Activated B cell treated with CpG ODN at 0.5 μM for 24 hours (primary cell): ENCODE measurements at regions of chr12 and their contacts with region 1.

Region 1: DNA sequence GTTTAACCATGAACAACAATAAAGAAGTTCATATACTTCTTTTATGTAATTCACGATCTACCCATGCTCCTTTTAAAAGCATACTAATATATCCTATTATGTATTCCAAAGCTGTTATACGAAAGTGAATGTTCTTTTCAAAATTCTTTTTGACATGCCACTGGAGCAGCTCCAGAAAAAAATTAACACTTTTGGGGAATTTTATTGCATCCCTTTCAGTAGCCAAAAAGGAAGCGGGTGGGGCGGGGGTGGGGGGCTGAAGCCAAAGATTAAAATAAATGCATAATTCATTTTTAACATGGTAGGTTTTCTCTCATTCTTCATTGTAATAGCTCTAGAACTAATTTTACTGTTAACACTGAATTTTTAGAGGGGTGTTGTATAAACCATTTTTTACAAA is 123.0 kb downstream of the ANKS1B start:
- DNase-seq: no peak
- ATAC-seq: no peak
- H3K4me3 Mint-ChIP-seq: no peak overlapping the region
- H3K27ac Mint-ChIP-seq: no peak overlapping the region
- H3K4me1 Mint-ChIP-seq: no peaks in the 10 kb centered on the region
- H3K27me3 Mint-ChIP-seq: no peaks in the 10 kb centered on the region
- CTCF ChIP-seq: no peak

Region 2: DNA sequence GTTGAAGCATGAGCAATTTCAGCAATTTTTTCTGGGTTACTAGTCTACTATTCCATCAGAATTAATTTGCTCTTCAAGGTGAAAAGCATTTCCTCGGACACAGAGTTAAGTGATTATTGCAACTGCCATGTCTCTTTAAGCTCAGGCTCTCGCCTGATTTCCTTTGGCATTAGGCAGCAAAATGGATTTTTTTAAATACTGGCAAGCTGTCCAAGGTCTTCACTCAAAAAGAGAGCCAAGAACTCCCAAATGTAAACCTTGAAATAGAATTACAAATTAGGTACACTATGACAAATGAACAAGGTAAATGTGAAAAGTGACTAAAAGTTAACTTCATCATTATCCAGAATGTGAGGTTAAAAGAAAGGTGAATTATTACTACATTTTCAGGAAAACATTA is 102.3 kb before region 1 on chr12:
- CTCF ChIA-PET with region 1: no interaction called
- POLR2A ChIA-PET with region 1: no interaction called
- intact Hi-C with region 1: no loop called
- DNase-seq: no peak
- ATAC-seq: no peak
- H3K4me3 Mint-ChIP-seq: no peak overlapping the region
- H3K27ac Mint-ChIP-seq: no peak overlapping the region
- H3K4me1 Mint-ChIP-seq: no peaks in the 10 kb centered on the region
- H3K27me3 Mint-ChIP-seq: no peaks in the 10 kb centered on the region
- CTCF ChIP-seq: no peak

Region 3: DNA sequence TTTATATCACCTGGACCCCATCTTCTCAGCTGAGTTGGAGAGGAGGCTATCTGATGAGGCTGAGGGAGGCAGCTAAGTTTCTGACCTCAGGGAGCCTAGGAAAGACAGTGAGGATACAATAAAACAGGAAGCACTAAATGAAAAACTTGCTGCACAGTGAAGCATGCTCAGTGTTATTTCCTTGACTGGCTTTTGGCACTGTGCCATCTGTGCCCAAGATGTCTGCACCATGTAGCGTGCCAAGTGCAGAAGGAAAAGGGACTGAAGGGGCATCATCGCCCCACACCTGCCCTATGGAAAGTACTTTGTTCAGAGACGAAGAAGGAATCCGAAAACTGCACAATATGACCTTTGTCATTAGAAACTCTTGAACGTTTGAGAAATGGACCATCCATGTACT is 1035.5 kb after region 1 on chr12:
- CTCF ChIA-PET with region 1: no interaction called
- POLR2A ChIA-PET with region 1: no interaction called
- intact Hi-C with region 1: loop called (anchors 5 kb)
- DNase-seq: no peak
- ATAC-seq: no peak
- H3K4me3 Mint-ChIP-seq: no peak overlapping the region
- H3K27ac Mint-ChIP-seq: no peak overlapping the region
- H3K4me1 Mint-ChIP-seq: no peaks in the 10 kb centered on the region
- H3K27me3 Mint-ChIP-seq: no peaks in the 10 kb centered on the region
- CTCF ChIP-seq: no peak